Activated naive CD4-positive, alpha-beta T cell treated with anti-CD3 and anti-CD28 coated beads for 36 hours (primary cell): ENCODE measurements at regions of chr1 and their contacts with region 1.

Region 1: GRCh38 chr1:110524311-110525251 is 5.6 kb upstream of the KCNA10 start:
- DNase-seq: peak; percentile 70
- H3K4me3 Mint-ChIP-seq: no peak overlapping the region
- H3K27ac Mint-ChIP-seq: no peak overlapping the region
- H3K4me1 Mint-ChIP-seq: no peaks in the 10 kb centered on the region
- H3K27me3 Mint-ChIP-seq: peaks cover 12% of the 10 kb centered on the region

Region 2: GRCh38 chr1:110605901-110606656 is 81.5 kb after region 1 on chr1 and contains the start of gene KCNA2:
- CTCF ChIA-PET with region 1: interaction called, 14 read pairs
- intact Hi-C with region 1: no loop called
- DNase-seq: no peak
- H3K4me3 Mint-ChIP-seq: peak within 1 kb of the TSS; percentile 75
- H3K27ac Mint-ChIP-seq: no peak within 1 kb of the TSS
- H3K4me1 Mint-ChIP-seq: peaks cover 17% of the 10 kb centered on the region
- H3K27me3 Mint-ChIP-seq: peaks cover 51% of the 10 kb centered on the region
- total RNA-seq, gene KCNA2: 0.19 to 0.64 TPM

Region 3: DNA sequence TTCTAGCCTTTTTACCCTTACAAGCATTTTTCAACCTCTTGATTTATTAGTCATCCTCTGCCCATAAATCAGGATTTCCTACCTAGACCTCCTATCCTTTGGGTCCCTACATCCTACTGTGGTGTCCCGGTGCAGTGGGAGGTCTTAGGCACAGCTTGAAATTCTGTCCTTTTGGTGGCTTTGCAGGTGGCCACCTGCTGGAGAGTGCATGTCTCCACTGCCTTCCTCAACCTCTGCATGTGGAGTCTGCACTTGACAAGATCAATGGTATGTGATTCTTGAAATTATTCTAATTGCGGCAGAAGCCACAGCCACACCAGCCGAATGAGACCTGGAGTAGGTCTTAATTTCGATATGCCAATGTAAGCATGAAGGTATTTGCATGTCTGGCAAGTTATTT is 161.6 kb after region 1 on chr1:
- CTCF ChIA-PET with region 1: no interaction called
- intact Hi-C with region 1: loop called (anchors 10 kb)
- DNase-seq: peak; percentile 19
- H3K4me3 Mint-ChIP-seq: no peak overlapping the region
- H3K27ac Mint-ChIP-seq: no peak overlapping the region
- H3K4me1 Mint-ChIP-seq: peaks cover 12% of the 10 kb centered on the region
- H3K27me3 Mint-ChIP-seq: no peaks in the 10 kb centered on the region

Region 4: DNA sequence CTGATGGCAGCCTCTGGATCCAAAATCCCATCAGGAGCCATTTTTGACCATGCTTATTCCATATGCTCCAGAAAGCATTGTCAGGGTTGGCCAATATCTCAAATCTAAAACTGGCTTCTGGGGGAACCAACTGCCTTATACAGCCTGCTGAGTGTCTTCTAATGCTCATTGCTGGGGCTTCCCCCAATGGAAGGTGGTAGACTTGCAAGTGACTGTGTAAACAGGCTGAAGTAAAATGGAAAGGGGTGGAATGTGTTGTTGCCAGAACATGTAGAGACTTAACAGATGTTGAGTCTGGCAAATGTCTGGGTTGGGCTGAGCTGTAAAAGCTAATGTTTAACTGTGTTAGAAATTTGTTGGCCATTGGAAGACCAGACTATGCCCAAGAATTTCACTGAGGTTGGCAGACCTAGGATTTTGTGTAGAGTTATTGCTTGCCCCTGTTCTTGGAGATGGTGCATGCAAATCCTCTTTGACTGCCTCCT is 461.9 kb after region 1 on chr1:
- CTCF ChIA-PET with region 1: no interaction called
- intact Hi-C with region 1: loop called (anchors 5 kb)
- DNase-seq: peak; percentile 28
- H3K4me3 Mint-ChIP-seq: no peak overlapping the region
- H3K27ac Mint-ChIP-seq: no peak overlapping the region
- H3K4me1 Mint-ChIP-seq: peaks cover 10% of the 10 kb centered on the region
- H3K27me3 Mint-ChIP-seq: peaks cover 5% of the 10 kb centered on the region